GM10248 (cell line): ENCODE measurements at regions of chr12 and their contacts with region 1.

Region 1: DNA sequence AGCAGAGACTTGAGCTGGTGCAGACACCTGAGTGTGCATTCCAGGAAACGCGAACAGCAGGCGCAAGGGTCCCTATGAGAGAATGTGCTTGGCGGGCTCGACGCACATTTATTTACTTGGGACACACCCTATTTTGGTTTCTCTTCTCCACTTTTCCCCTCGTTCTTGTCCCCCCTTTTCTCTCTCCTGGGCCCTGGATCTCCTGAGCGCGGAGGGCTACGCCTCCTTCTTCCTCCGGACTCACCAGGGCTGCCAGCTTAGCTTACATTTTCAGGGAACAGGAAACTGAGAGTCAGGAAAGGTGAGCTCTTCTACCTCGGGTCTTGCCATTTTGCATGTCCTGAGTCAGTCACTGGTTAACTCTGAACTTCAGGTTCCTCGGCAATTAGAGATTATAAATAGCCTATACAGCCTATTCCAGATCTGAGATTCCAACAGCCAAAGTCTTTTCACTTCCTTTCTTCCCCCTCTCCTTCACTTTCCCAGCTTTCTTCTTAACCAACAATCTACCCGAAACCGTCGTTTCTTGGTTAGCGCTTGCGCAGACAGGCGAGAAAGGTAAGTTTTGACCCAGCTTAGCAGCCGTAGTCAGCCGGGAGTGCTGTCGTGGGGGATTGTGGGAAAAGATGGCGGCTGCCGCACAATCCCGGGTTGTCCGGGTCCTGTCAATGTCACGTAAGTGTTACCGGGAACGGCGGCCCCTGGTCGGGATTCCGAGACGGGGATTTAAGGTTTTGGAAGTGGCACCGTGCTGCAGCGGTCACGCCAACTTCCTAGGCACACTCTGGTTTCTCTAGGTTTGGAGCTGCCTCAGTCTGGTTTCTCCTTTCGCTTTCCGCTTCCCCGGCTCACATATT is at the starts of genes AKAP3 and NDUFA9:
- DNase-seq: peak; percentile 80
- CTCF ChIP-seq: no peak

Region 2: GRCh38 chr12:4626543-4626942 is 22.2 kb before region 1 on chr12:
- CTCF ChIA-PET with region 1: interaction called, 10 read pairs
- POLR2A ChIA-PET with region 1: no interaction called
- DNase-seq: no peak
- CTCF ChIP-seq: no peak